ENCODE measurements at regions of chr4 and their contacts with region 1.

Region 1: GRCh38 chr4:168923526-168924194 is 86.4 kb downstream of the CBR4 start:
- DNase-seq: peak; percentile 54 to 68
- H3K4me3 ChIP-seq: no peak overlapping the region
- H3K4me3 Mint-ChIP-seq: no peak overlapping the region
- H3K27ac Mint-ChIP-seq: no peak overlapping the region
- H3K4me1 ChIP-seq: no peaks in the 10 kb centered on the region
- H3K4me1 Mint-ChIP-seq: peaks cover 7% of the 10 kb centered on the region
- H3K27me3 ChIP-seq: no peaks in the 10 kb centered on the region
- H3K27me3 Mint-ChIP-seq: no peaks in the 10 kb centered on the region
- CTCF ChIP-seq: peak; percentile 37 to 66

Region 2: DNA sequence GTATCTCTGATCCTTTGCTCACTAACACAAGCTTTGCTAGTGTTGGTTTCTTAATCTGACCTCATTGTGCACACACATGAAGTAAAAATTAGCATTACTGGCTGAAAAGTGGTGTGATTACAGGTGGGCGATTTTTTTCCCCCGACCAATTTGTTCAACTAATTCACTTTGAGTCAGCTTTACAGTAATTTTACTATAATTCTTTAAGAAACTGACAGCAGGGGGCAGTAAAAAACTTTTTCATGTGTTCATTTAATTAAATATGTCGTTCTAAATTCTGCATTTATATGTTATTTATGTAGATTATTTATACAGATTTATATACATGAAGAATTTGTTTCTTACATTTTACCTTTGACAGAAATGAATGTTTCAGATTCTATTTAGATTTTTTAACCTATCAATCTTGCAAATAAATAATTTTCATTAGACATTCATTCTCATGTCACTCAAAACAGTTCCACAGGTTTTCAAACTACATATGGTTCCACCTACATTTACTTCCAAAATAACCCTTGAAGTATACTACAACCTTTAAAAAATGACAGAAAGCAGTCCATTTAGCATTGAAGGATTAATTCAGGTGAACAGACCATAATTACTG is 409.3 kb before region 1 on chr4:
- CTCF ChIA-PET with region 1: interaction called, 5 read pairs
- POLR2A ChIA-PET with region 1: no interaction called
- intact Hi-C with region 1: loop called (anchors 2 kb)
- DNase-seq: peak in 1 of 2 experiments; percentile 24
- H3K4me3 ChIP-seq: no peak overlapping the region
- H3K4me3 Mint-ChIP-seq: no peak overlapping the region
- H3K27ac Mint-ChIP-seq: no peak overlapping the region
- H3K4me1 ChIP-seq: no peaks in the 10 kb centered on the region
- H3K4me1 Mint-ChIP-seq: no peaks in the 10 kb centered on the region
- H3K27me3 ChIP-seq: no peaks in the 10 kb centered on the region
- H3K27me3 Mint-ChIP-seq: peaks cover 9% of the 10 kb centered on the region
- CTCF ChIP-seq: peak; percentile 22 to 57

Region 3: DNA sequence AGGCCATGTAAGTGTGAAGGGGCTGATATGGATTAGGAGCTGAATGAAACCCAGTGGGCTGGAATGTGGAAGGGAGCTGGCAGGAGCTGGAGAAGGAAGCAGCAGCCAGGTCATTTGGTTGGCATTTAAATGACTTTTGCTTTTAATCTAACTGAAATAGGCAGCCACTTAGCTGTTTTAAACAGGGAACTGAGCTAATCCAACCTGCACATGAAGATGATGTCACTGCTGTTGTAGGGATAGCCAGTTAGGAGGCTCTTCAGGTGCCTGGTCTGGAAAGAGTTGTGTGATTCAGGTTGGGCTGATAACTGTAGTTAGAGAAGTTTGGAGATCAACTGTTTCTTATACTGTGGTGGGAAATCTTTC is 304.4 kb before region 1 on chr4:
- CTCF ChIA-PET with region 1: no interaction called
- POLR2A ChIA-PET with region 1: interaction called, 11 read pairs
- intact Hi-C with region 1: no loop called
- DNase-seq: no peak
- H3K4me3 ChIP-seq: no peak overlapping the region
- H3K4me3 Mint-ChIP-seq: no peak overlapping the region
- H3K27ac Mint-ChIP-seq: no peak overlapping the region
- H3K4me1 ChIP-seq: no peaks in the 10 kb centered on the region
- H3K4me1 Mint-ChIP-seq: no peaks in the 10 kb centered on the region
- H3K27me3 ChIP-seq: no peaks in the 10 kb centered on the region
- H3K27me3 Mint-ChIP-seq: peaks cover 5% of the 10 kb centered on the region
- CTCF ChIP-seq: no peak

Region 4: DNA sequence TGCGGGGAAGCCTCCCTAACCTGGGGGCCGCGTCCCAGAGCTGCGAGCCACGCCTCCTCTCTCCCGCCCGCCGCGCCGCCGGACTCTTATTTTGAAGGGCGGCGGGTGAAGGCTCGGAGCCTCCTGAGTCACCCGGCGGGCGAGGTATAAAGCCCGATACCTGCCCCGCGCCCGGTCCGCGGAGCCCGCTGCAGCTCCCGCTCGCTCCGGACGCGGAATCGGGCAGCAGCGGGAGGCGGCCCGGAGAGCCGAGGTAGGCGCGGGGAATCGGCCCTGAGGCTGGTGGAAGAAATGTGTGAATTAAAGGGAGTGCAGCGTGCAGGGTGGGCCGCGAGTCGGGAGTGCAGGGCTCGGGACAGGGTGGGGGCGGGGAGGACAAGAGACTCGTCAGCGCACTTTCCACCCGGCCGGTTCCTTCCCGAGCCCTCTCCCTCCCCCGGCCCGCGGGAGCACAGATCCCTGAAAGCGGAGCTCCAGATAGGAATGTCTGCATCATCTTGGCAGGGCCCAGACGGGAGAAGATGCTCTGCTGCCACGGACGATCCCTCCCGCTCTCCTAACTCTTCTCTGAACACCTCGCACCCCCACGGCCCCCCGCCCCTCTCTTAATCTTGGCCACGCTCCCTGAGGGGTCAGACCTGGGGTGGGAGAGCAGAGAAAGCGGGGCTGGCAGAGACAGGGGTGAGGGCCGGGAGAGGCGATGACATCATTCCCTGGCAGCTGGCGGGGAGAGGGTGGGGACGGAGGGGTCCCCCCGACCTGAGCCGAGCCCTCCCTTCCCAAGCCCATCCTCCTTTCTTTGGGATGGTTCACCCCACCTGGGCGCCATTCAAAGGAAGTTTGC is 91.5 kb before region 1 on chr4:
- CTCF ChIA-PET with region 1: no interaction called
- POLR2A ChIA-PET with region 1: no interaction called
- intact Hi-C with region 1: loop called (anchors 5 kb)
- DNase-seq: peak; percentile 67 to 79
- H3K4me3 ChIP-seq: peak overlapping the region; percentile 60
- H3K4me3 Mint-ChIP-seq: peak overlapping the region; percentile 71
- H3K27ac Mint-ChIP-seq: peak overlapping the region; percentile 9
- H3K4me1 ChIP-seq: no peaks in the 10 kb centered on the region
- H3K4me1 Mint-ChIP-seq: no peaks in the 10 kb centered on the region
- H3K27me3 ChIP-seq: no peaks in the 10 kb centered on the region
- H3K27me3 Mint-ChIP-seq: no peaks in the 10 kb centered on the region
- CTCF ChIP-seq: no peak

Region 5: DNA sequence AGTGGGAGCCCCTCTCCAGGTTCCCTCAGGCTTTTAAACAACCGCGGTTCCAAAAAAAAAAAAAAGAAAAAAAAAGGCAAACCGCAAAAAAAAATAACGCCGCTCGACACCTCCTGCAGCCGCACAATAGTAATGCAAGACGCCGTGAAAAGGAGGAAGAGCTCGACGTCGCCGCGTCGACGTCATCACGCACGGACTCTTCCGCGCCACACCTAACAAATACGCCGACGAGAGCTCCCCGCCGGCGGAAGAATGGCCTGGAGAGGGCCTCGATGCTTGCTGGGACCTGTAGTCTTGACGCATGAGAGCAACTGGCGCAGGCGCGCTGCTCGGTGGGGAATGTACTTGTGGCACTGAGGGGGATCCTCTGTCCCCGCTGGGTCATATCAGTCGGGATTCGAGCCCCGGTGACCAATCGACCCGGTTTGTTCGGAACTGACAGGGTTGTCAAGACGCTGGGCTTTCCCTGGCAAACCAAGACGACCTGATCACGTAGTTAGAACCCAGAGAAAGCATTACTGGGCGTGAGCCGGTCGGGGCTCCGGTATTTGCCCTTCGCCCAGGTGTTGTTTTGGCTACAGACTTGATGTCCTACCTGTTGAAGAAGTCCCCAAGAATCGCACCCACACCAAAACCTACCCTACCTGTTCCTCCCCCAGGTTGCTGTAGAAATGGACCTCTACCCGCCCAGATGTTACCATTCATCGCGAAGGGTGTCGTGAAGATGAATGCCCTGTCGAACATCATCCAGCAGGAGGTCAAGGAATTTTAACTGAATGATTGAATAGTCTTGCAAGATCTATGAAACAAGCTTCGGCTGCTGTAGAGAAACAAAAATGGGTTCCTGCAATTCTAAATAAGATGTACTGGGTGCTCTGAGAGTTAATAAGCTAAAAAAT is 86.7 kb after region 1 on chr4 and contains the start of gene CBR4:
- CTCF ChIA-PET with region 1: interaction called, 5 read pairs
- POLR2A ChIA-PET with region 1: interaction called, 7 read pairs
- intact Hi-C with region 1: loop called (anchors 1 kb)
- DNase-seq: peak; percentile 94 to 97
- H3K4me3 ChIP-seq: peak within 1 kb of the TSS; percentile 65
- H3K4me3 Mint-ChIP-seq: peak within 1 kb of the TSS; percentile 91
- H3K27ac Mint-ChIP-seq: peak within 1 kb of the TSS; percentile 97
- H3K4me1 ChIP-seq: peaks cover 28% of the 10 kb centered on the region
- H3K4me1 Mint-ChIP-seq: peaks cover 16% of the 10 kb centered on the region
- H3K27me3 ChIP-seq: no peaks in the 10 kb centered on the region
- H3K27me3 Mint-ChIP-seq: no peaks in the 10 kb centered on the region
- CTCF ChIP-seq: peak; percentile 23 to 41
- total RNA-seq, gene CBR4: 21.4 and 22.5 TPM in 2 replicates

Region 6: GRCh38 chr4:169492438-169493163 is 568.9 kb after region 1 on chr4:
- CTCF ChIA-PET with region 1: no interaction called
- POLR2A ChIA-PET with region 1: no interaction called
- intact Hi-C with region 1: loop called (anchors 1 kb)
- DNase-seq: peak in 1 of 2 experiments; percentile 57
- H3K4me3 ChIP-seq: no peak overlapping the region
- H3K4me3 Mint-ChIP-seq: no peak overlapping the region
- H3K27ac Mint-ChIP-seq: no peak overlapping the region
- H3K4me1 ChIP-seq: no peaks in the 10 kb centered on the region
- H3K4me1 Mint-ChIP-seq: no peaks in the 10 kb centered on the region
- H3K27me3 ChIP-seq: no peaks in the 10 kb centered on the region
- H3K27me3 Mint-ChIP-seq: no peaks in the 10 kb centered on the region
- CTCF ChIP-seq: peak; percentile 74 to 81